GM10248 (cell line): ENCODE measurements at regions of chr16 and their contacts with region 1.

Region 1: DNA sequence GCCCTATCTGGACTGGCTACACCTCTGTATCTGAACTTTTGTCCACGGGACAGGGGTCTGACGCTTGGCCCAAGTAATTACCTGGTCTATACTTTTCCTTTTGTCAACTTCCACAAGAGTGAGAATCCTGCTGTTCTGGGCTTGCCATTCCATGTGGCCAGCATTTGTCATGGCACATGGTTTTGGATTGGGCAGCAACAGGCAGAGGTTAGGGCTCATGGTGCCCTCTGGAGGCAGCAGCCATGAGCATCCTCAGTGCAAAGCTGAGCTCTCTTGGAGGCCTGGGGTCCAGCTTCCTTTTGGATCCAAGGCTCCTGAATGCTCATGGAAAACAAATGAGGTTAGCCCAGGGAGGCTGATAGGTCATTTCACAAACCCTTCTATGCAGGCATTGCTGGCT is 7.5 kb upstream of the EDC4 start:
- DNase-seq: no peak
- CTCF ChIP-seq: peak; percentile 42

Region 2: DNA sequence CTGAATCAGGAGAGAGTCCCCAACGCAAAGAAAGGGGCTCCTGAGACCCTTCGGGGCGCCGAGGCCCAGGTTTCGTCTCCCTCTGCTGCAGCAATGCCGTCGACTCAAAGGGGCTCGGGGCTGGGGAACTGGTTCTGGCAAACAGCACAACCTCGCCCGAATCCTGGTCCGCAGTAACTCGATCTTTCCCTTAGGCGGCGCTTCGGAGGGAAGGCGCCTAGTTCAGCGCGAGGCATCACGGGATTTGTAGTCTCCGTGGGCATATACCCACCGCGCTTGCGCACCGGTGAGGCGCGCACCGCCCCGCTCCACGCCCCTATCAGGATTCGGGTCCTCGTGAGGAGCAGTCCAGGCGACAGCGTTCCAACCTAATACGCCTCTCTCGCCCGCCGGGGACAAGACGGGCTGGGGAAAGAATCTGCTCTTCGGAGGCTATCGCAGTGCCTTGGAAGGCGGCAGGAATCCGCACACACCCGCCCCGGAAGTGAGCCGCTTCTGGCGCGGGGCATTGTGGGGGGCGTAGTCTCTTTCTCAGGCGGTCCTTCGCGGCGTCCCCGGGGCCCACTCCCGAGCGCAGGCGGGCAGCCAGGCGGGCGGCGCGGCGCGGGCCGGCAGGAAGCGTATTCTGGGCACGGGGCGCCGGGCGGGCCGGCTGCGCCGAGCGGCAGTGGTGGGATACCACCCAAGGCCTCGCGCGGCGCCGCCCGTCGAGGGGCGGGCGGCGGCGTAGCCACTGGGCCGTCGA is 23.4 kb before region 1 on chr16 and contains the start of gene THAP11:
- CTCF ChIA-PET with region 1: interaction called, 11 read pairs
- POLR2A ChIA-PET with region 1: no interaction called
- DNase-seq: peak; percentile 92
- CTCF ChIP-seq: peak; percentile 87